Dorsolateral prefrontal cortex (tissue), 120 donors: ENCODE measurements at regions of chr2 and their contacts with region 1.

Region 1: DNA sequence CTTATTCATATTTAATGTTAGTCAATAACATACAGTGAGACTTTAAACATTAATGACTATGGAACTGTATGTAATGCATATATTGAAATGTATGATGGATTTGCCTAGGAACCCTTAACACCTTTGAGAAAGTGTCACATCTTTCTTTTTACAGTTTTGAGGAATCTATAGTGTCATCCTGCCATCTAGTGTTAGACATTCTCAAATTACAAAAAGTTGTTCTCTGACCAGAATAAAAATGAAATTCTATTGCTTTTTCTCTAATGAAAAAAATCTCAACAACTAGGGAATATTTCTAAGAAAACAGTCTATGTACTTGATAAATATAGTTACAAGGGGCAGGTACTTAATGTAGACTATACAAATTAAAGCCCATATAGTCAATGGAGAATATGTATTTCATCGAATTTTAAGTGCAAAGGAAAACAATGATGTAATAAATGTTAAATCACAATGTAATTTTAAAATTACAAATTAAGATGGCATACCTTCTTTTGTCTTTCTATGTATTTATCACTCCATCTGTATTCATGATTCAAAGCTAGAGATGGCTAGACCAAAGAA is 5.1 kb upstream of the CALCRL start:
- DNase-seq: no peak
- H3K4me3 ChIP-seq: no peak overlapping the region
- H3K27ac ChIP-seq: no peak overlapping the region
- H3K27me3 ChIP-seq: no peaks in the 10 kb centered on the region
- CTCF ChIP-seq: peak; percentile 32 to 90 (median 64)

Region 2: GRCh38 chr2:186503848-186504606 is 949.1 kb before region 1 on chr2:
- intact Hi-C with region 1: loop called in 1 of 2 experiments (anchors 10 kb)
- DNase-seq: no peak
- H3K4me3 ChIP-seq: peak overlapping the region in 1 of 59 donors; percentile 6
- H3K27ac ChIP-seq: peak overlapping the region in 12 of 59 donors; percentile 8 to 63 (median 38)
- H3K27me3 ChIP-seq: no peaks in the 10 kb centered on the region
- CTCF ChIP-seq: peak; percentile 54 to 89 (median 78)

Region 3: GRCh38 chr2:186862869-186863709 is 590.1 kb before region 1 on chr2:
- intact Hi-C with region 1: loop called (anchors 2 to 10 kb)
- DNase-seq: no peak
- H3K4me3 ChIP-seq: no peak overlapping the region
- H3K27ac ChIP-seq: no peak overlapping the region
- H3K27me3 ChIP-seq: no peaks in the 10 kb centered on the region
- CTCF ChIP-seq: peak; percentile 57 to 93 (median 76)